Mammary epithelial cell (primary cell): ENCODE measurements at regions of chr9 and their contacts with region 1.

Region 1: GRCh38 chr9:133375724-133376654 is at the starts of genes STKLD1 and SURF4:
- DNase-seq: peak; percentile 96
- H3K4me3 ChIP-seq: peak within 1 kb of the TSS; percentile 65 to 89 (median 82)
- H3K27ac ChIP-seq: peak within 1 kb of the TSS; percentile 83
- H3K4me1 ChIP-seq: peaks cover 16% of the 10 kb centered on the region
- H3K27me3 ChIP-seq: no peaks in the 10 kb centered on the region
- CTCF ChIP-seq: no peak
- total RNA-seq, gene STKLD1: 0.67 to 1.0 TPM
- total RNA-seq, gene SURF4: 192 to 214 TPM

Region 2: GRCh38 chr9:133335878-133336811 is 39.8 kb before region 1 on chr9 and contains the start of gene SURF6:
- CTCF ChIA-PET with region 1: no interaction called
- dilution Hi-C with region 1: no loop called
- in situ Hi-C with region 1: no loop called
- intact Hi-C with region 1: loop called (anchors 1 kb)
- DNase-seq: peak; percentile 91
- H3K4me3 ChIP-seq: peak within 1 kb of the TSS; percentile 77 to 88 (median 81)
- H3K27ac ChIP-seq: peak within 1 kb of the TSS; percentile 58
- H3K4me1 ChIP-seq: peaks cover 18% of the 10 kb centered on the region
- H3K27me3 ChIP-seq: no peaks in the 10 kb centered on the region
- CTCF ChIP-seq: no peak
- total RNA-seq, gene SURF6: 6.8 to 27.2 TPM

Region 3: DNA sequence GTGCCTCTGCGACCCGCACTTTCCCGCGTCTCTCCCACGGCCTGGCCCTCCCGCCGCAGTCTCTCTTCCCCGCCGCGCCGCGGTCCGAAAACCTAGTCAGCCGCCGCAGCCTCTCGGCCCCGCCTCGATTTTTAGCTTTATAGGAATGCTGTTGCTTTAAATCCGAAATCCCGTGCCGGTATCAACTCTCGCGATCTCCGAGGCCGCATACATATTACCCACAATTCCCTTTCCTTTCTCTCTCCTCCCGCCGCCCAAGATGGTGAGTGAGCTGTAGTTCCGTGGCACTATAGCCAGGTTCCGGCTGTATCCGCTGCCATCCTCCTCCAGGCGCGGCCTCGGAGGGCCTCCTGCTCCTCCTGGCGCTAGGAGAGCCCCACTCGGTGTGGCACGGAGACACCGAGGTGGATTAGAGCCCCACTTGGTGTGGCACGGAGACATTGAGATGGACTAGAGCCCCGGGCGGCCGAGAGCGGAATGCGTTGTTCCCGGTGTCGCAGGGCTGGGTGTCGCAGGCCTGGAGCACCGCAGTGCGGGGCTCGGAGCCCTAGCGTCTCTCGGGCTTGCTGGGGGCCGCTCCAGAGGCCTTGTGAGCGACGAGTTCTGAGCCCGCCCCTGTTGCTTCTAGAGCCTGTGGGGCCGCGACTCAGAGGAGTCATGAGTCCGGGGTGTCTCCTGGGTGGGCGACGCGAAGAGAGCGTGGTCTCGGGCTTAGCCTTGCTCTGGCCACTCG is 27.8 kb before region 1 on chr9 and contains the starts of genes MED22 and RPL7A:
- CTCF ChIA-PET with region 1: no interaction called
- dilution Hi-C with region 1: no loop called
- in situ Hi-C with region 1: no loop called
- intact Hi-C with region 1: loop called (anchors 1 kb)
- DNase-seq: peak; percentile 93
- H3K4me3 ChIP-seq: peak within 1 kb of the TSS; percentile 82 to 98 (median 87)
- H3K27ac ChIP-seq: peak within 1 kb of the TSS; percentile 89
- H3K4me1 ChIP-seq: peaks cover 17% of the 10 kb centered on the region
- H3K27me3 ChIP-seq: no peaks in the 10 kb centered on the region
- CTCF ChIP-seq: no peak
- total RNA-seq, gene MED22: 17.2 to 35.4 TPM
- total RNA-seq, gene RPL7A: 1,339 to 1,542 TPM

Region 4: DNA sequence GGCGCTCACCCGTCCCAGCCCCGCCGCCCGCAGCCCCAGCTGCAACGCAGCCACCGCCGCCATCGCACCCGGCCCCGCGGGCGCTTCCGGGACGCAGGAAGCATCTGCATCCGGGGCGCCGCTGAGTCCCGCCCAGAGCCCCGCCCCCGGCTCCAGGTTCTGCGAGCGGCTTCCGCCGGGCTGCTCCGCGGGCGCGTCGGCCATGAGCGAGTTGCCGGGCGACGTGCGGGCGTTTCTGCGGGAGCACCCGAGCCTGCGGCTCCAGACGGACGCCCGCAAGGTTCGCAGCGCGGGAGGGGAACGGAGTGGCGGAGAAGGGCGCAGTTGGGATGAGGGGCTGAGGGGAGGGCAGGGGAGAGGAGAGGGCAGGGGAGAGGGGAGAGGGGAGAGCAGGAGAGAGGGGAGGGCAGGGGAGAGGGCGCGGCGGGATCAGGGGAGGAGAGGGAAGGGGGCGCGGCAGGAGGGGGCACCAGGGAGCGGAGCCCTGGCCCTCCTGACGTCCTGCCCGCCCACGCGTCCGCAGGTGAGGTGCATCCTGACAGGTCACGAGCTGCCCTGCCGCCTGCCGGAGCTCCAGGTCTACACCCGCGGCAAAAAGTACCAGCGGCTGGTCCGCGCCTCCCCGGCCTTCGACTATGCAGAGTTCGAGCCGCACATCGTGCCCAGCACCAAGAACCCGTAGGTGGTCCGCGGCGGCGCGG is 19.4 kb before region 1 on chr9 and contains the starts of genes SURF1 and SURF2:
- CTCF ChIA-PET with region 1: no interaction called
- dilution Hi-C with region 1: no loop called
- in situ Hi-C with region 1: no loop called
- intact Hi-C with region 1: loop called (anchors 2 kb)
- DNase-seq: peak; percentile 76
- H3K4me3 ChIP-seq: peak within 1 kb of the TSS; percentile 66 to 97 (median 70)
- H3K27ac ChIP-seq: peak within 1 kb of the TSS; percentile 40
- H3K4me1 ChIP-seq: peaks cover 16% of the 10 kb centered on the region
- H3K27me3 ChIP-seq: no peaks in the 10 kb centered on the region
- CTCF ChIP-seq: peak; percentile 7 to 40
- total RNA-seq, gene SURF1: 17.5 to 23.4 TPM
- total RNA-seq, gene SURF2: 22.5 to 42.2 TPM

Region 5: DNA sequence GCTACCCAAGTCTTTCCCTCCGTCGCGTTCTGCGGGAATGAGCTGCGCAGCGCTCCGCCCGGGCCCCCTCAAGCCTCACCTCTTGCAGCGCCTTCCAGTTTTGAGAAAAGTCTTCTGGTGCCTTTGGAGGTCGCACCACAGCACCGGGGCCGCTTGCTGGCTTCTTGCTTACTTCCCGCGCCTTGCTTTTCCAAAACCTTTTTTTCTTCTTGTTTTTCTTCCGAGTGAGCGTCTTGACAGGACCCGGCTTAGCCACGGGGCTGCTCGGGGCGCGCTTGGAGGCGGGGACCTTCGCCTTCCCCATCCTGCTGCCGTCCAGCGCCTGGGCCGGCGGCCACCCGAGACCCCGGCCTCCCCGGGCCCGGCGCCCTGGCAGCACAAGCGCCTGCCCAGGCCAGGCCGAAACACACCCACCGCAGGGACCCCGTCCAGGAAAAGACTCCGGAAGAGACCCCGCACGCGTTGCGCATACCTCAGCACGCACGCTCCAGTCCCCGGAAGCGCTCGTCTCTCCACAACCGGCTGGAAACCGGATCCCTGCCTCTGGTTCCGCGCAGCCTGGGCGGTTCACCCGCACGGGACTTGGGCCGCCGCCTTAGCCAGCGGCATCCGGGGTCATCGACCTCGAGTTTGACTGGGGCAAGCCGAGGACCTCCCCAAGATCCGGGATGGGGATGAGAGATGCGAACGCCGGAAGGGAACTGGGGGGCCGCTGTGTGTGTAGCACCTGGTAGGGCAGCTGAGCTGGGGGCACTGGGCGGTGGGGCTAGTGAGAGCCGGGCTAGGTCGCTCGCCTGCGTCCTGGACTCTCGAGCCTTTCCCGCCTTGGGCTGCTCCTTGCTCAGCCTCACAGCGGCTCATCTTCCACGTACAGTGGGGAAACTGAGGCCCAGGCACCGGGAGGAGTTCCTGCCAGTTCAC is 41.8 kb after region 1 on chr9 and contains the start of gene REXO4:
- CTCF ChIA-PET with region 1: no interaction called
- dilution Hi-C with region 1: loop called (anchors 5 kb)
- in situ Hi-C with region 1: no loop called
- intact Hi-C with region 1: no loop called
- DNase-seq: peak; percentile 87
- H3K4me3 ChIP-seq: peak within 1 kb of the TSS; percentile 80 to 95 (median 93)
- H3K27ac ChIP-seq: peak within 1 kb of the TSS; percentile 64
- H3K4me1 ChIP-seq: peaks cover 12% of the 10 kb centered on the region
- H3K27me3 ChIP-seq: no peaks in the 10 kb centered on the region
- CTCF ChIP-seq: no peak
- total RNA-seq, gene REXO4: 14.8 to 33.1 TPM

Region 6: GRCh38 chr9:133449760-133450159 is 73.8 kb after region 1 on chr9:
- CTCF ChIA-PET with region 1: no interaction called
- dilution Hi-C with region 1: no loop called
- in situ Hi-C with region 1: no loop called
- intact Hi-C with region 1: no loop called
- DNase-seq: peak; percentile 74
- H3K4me3 ChIP-seq: no peak overlapping the region
- H3K27ac ChIP-seq: no peak overlapping the region
- H3K4me1 ChIP-seq: peaks cover 6% of the 10 kb centered on the region
- H3K27me3 ChIP-seq: no peaks in the 10 kb centered on the region
- CTCF ChIP-seq: no peak

Region 7: GRCh38 chr9:133467101-133467500 is 91.1 kb after region 1 on chr9:
- CTCF ChIA-PET with region 1: no interaction called
- dilution Hi-C with region 1: loop called (anchors 5 kb)
- in situ Hi-C with region 1: no loop called
- intact Hi-C with region 1: no loop called
- DNase-seq: no peak
- H3K4me3 ChIP-seq: no peak overlapping the region
- H3K27ac ChIP-seq: no peak overlapping the region
- H3K4me1 ChIP-seq: no peaks in the 10 kb centered on the region
- H3K27me3 ChIP-seq: no peaks in the 10 kb centered on the region
- CTCF ChIP-seq: no peak

Region 8: GRCh38 chr9:133604214-133604613 is 228.2 kb after region 1 on chr9:
- CTCF ChIA-PET with region 1: no interaction called
- dilution Hi-C with region 1: no loop called
- in situ Hi-C with region 1: no loop called
- intact Hi-C with region 1: no loop called
- DNase-seq: no peak
- H3K4me3 ChIP-seq: no peak overlapping the region
- H3K27ac ChIP-seq: no peak overlapping the region
- H3K4me1 ChIP-seq: no peaks in the 10 kb centered on the region
- H3K27me3 ChIP-seq: peaks cover 24% of the 10 kb centered on the region
- CTCF ChIP-seq: no peak